Tibial artery (tissue), 4 donors: ENCODE measurements at regions of chr18 and their contacts with region 1.

Region 1: GRCh38 chr18:24488824-24489493 is 28.5 kb downstream of the HRH4 start:
- DNase-seq: no peak
- H3K4me3 ChIP-seq: no peak overlapping the region
- H3K27ac ChIP-seq: no peak overlapping the region
- H3K4me1 ChIP-seq: peaks cover 0 to 5% (median 0%) of the 10 kb centered on the region in 4 donors
- H3K27me3 ChIP-seq: peaks cover 0 to 3% of the 10 kb centered on the region in 2 donors
- CTCF ChIP-seq: peak; percentile 66 to 80

Region 2: GRCh38 chr18:24362758-24363157 is 126.2 kb before region 1 on chr18:
- intact Hi-C with region 1: loop called (anchors 1 kb)
- DNase-seq: no peak
- H3K4me3 ChIP-seq: no peak overlapping the region
- H3K27ac ChIP-seq: no peak overlapping the region
- H3K4me1 ChIP-seq: no peaks in the 10 kb centered on the region
- H3K27me3 ChIP-seq: no peaks in the 10 kb centered on the region
- CTCF ChIP-seq: no peak

Region 3: DNA sequence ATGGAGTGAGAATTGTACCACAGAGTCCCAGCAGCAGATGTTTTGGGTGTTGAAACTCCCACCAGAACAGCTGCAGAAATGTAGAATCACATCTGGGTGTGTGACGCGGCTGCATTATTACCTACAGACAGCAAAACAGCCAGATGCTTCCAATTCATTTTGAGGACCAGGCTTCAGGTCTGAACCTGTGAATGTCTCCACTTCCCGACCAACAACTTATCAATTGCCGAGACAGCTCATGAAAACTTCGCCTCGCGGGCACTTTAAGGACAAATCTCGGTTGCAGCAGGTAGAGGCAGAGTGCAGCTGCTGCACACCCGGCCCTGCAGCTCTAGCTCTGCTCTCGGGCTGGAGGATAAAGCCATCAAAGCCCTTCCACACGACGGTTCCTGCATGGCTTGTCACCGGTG is 173.5 kb after region 1 on chr18:
- intact Hi-C with region 1: no loop called
- DNase-seq: no peak
- H3K4me3 ChIP-seq: no peak overlapping the region
- H3K27ac ChIP-seq: no peak overlapping the region
- H3K4me1 ChIP-seq: no peaks in the 10 kb centered on the region
- H3K27me3 ChIP-seq: no peaks in the 10 kb centered on the region
- CTCF ChIP-seq: no peak